Common myeloid progenitor, CD34-positive (primary cell): ENCODE measurements at regions of chr17 and their contacts with region 1.

Region 1: DNA sequence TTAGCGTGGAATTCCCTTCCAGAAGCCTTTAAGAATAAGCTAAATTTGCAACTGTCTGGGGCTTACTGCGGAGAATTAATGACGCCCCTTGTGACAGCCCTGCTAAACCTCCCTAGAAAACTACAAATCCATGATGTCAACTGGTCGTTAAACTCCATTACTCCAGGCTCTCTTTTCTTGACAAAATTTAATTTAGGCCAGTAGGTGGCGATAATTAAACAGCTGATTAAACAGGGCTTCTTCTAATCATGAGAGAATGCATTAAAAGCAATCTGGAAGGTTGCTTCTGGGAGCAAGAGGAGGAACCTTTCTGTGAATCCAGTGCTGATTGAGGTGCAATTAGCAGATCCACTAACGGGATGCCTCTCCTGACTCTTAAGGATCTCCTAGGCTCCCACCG is 8.1 kb upstream of the NLRP1 start:
- DNase-seq: peak; percentile 44 to 69 (median 66)
- H3K4me3 ChIP-seq: no peak overlapping the region
- H3K27ac ChIP-seq: no peak overlapping the region
- H3K4me1 ChIP-seq: no peaks in the 10 kb centered on the region
- H3K27me3 ChIP-seq: peaks cover 0 to 26% (median 11%) of the 10 kb centered on the region in 5 experiments

Region 2: GRCh38 chr17:5526821-5527598 is 65.4 kb before region 1 on chr17:
- CTCF ChIA-PET with region 1: no interaction called
- POLR2A ChIA-PET with region 1: no interaction called
- DNase-seq: peak; percentile 87 to 95 (median 95)
- H3K4me3 ChIP-seq: peak overlapping the region in 1 of 7 experiments; percentile 2
- H3K27ac ChIP-seq: peak overlapping the region in 1 of 2 experiments; percentile 63
- H3K4me1 ChIP-seq: peaks cover 0 to 20% (median 17%) of the 10 kb centered on the region in 4 experiments
- H3K27me3 ChIP-seq: no peaks in the 10 kb centered on the region

Region 3: DNA sequence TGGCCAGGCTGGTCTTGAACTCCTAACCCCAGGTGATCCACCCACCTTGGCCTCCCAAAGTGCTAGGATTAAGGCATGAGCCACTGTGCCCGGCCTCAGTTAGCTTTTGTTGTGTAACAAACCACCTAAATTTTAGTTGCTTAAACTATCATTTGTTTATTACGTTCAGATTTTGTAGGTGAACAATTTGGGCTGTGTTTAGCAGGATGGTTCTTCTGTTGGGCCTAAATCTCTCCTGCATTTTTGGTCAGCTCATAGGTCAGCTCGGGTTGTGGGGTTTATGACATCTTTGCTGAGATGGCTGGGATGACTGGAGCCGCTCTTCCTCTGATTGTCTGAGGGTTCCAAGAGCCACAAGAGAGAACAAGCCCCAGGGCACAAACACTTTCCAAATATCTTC is 13.1 kb after region 1 on chr17:
- CTCF ChIA-PET with region 1: interaction called, 31 read pairs
- POLR2A ChIA-PET with region 1: no interaction called
- DNase-seq: no peak
- H3K4me3 ChIP-seq: no peak overlapping the region
- H3K27ac ChIP-seq: no peak overlapping the region
- H3K4me1 ChIP-seq: peaks cover 0 to under 1% (median 0%) of the 10 kb centered on the region in 4 experiments
- H3K27me3 ChIP-seq: peaks cover 0 to 9% (median 4%) of the 10 kb centered on the region in 5 experiments

Region 4: GRCh38 chr17:5706577-5707216 is 114.3 kb after region 1 on chr17:
- CTCF ChIA-PET with region 1: interaction called, 52 read pairs
- POLR2A ChIA-PET with region 1: interaction called, 6 read pairs
- DNase-seq: peak; percentile 44 to 75 (median 65)
- H3K4me3 ChIP-seq: no peak overlapping the region
- H3K27ac ChIP-seq: no peak overlapping the region
- H3K4me1 ChIP-seq: no peaks in the 10 kb centered on the region
- H3K27me3 ChIP-seq: peaks cover 2 to 17% (median 3%) of the 10 kb centered on the region in 5 experiments

Region 5: GRCh38 chr17:6421700-6422604 is 829.6 kb after region 1 on chr17:
- CTCF ChIA-PET with region 1: interaction called, 15 read pairs
- POLR2A ChIA-PET with region 1: no interaction called
- DNase-seq: peak; percentile 46 to 71 (median 62)
- H3K4me3 ChIP-seq: no peak overlapping the region
- H3K27ac ChIP-seq: no peak overlapping the region
- H3K4me1 ChIP-seq: peaks cover 0 to 4% (median 3%) of the 10 kb centered on the region in 4 experiments
- H3K27me3 ChIP-seq: peaks cover 0 to 29% (median 5%) of the 10 kb centered on the region in 5 experiments

Region 6: GRCh38 chr17:6439951-6440350 is 847.6 kb after region 1 on chr17:
- CTCF ChIA-PET with region 1: interaction called, 11 read pairs
- POLR2A ChIA-PET with region 1: no interaction called
- DNase-seq: no peak
- H3K4me3 ChIP-seq: no peak overlapping the region
- H3K27ac ChIP-seq: no peak overlapping the region
- H3K4me1 ChIP-seq: peaks cover 0 to 16% (median 11%) of the 10 kb centered on the region in 4 experiments
- H3K27me3 ChIP-seq: peaks cover 0 to 15% (median 8%) of the 10 kb centered on the region in 5 experiments